PC-3 (cell line): ENCODE measurements at regions of chr7 and their contacts with region 1.

Region 1: DNA sequence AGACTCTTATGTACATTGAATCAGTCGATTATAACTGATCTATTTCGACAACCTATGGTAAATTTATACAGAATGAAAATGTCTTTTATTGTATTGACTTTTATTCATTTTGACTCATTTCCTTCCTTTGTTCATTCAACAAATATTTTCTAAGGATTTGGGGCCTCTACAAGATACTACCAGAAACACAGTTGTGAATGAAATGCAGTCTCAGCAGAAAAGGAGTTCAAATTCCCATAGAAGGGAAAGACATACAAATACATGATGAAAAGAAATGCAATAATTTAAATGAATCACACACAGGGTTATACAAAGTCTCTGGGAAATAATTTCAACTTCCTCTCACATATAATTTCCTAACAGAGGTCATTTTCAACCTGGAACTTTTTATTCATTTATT is 134.0 kb upstream of the SEMA3A start:
- DNase-seq: peak; percentile 61
- ATAC-seq: peak; percentile 88
- H3K4me3 ChIP-seq: peak overlapping the region; percentile 6; the same call in 1 of the 2 replicates
- H3K27ac ChIP-seq: peak overlapping the region; percentile 71
- H3K4me1 ChIP-seq: peaks cover 16% of the 10 kb centered on the region; the same call in 1 of the 2 replicates
- H3K27me3 ChIP-seq: no peaks in the 10 kb centered on the region
- CTCF ChIP-seq: no peak

Region 2: GRCh38 chr7:84092207-84092606 is 236.4 kb before region 1 on chr7:
- CTCF ChIA-PET with region 1: no interaction called
- POLR2A ChIA-PET with region 1: no interaction called
- intact Hi-C with region 1: no loop called
- DNase-seq: peak; percentile 35
- ATAC-seq: peak; percentile 51
- H3K4me3 ChIP-seq: peak overlapping the region; percentile 24; the same call in 1 of the 2 replicates
- H3K27ac ChIP-seq: no peak overlapping the region
- H3K4me1 ChIP-seq: peaks cover 21% of the 10 kb centered on the region
- H3K27me3 ChIP-seq: no peaks in the 10 kb centered on the region
- CTCF ChIP-seq: no peak

Region 3: GRCh38 chr7:84149573-84149972 is 179.0 kb before region 1 on chr7:
- CTCF ChIA-PET with region 1: no interaction called
- POLR2A ChIA-PET with region 1: no interaction called
- intact Hi-C with region 1: no loop called
- DNase-seq: no peak
- ATAC-seq: no peak
- H3K4me3 ChIP-seq: no peak overlapping the region
- H3K27ac ChIP-seq: no peak overlapping the region
- H3K4me1 ChIP-seq: peaks cover 9% of the 10 kb centered on the region; the same call in 1 of the 2 replicates
- H3K27me3 ChIP-seq: no peaks in the 10 kb centered on the region
- CTCF ChIP-seq: no peak

Region 4: GRCh38 chr7:84248267-84248666 is 80.3 kb before region 1 on chr7:
- CTCF ChIA-PET with region 1: no interaction called
- POLR2A ChIA-PET with region 1: no interaction called
- intact Hi-C with region 1: loop called (anchors 2 kb)
- DNase-seq: no peak
- ATAC-seq: no peak
- H3K4me3 ChIP-seq: no peak overlapping the region
- H3K27ac ChIP-seq: peak overlapping the region; percentile 72; the same call in 1 of the 2 replicates
- H3K4me1 ChIP-seq: peaks cover 32% of the 10 kb centered on the region
- H3K27me3 ChIP-seq: no peaks in the 10 kb centered on the region
- CTCF ChIP-seq: no peak

Region 5: GRCh38 chr7:84281518-84281917 is 47.1 kb before region 1 on chr7:
- CTCF ChIA-PET with region 1: no interaction called
- POLR2A ChIA-PET with region 1: no interaction called
- intact Hi-C with region 1: loop called (anchors 5 kb)
- DNase-seq: no peak
- ATAC-seq: no peak
- H3K4me3 ChIP-seq: no peak overlapping the region
- H3K27ac ChIP-seq: no peak overlapping the region
- H3K4me1 ChIP-seq: no peaks in the 10 kb centered on the region; the same call in 1 of the 2 replicates
- H3K27me3 ChIP-seq: no peaks in the 10 kb centered on the region
- CTCF ChIP-seq: no peak